ENCODE measurements at regions of chr11 and their contacts with region 1.

Region 1: GRCh38 chr11:82906244-82906654 is 4.7 kb downstream of the DDIAS start:
- DNase-seq: no peak
- H3K4me3 ChIP-seq: no peak overlapping the region
- H3K27ac ChIP-seq: no peak overlapping the region
- H3K4me1 ChIP-seq: peaks cover 0 to 5% (median 5%) of the 10 kb centered on the region in 4 donors
- H3K27me3 ChIP-seq: no peaks in the 10 kb centered on the region
- CTCF ChIP-seq: peak; percentile 21 to 58 (median 33)
- EP300 ChIP-seq: no peak
- POLR2A ChIP-seq: no peak

Region 2: GRCh38 chr11:83187465-83187864 is 281.2 kb after region 1 on chr11:
- intact Hi-C with region 1: no loop called
- DNase-seq: no peak
- H3K4me3 ChIP-seq: no peak overlapping the region
- H3K27ac ChIP-seq: no peak overlapping the region
- H3K4me1 ChIP-seq: peaks cover 0 to 7% (median 6%) of the 10 kb centered on the region in 4 donors
- H3K27me3 ChIP-seq: no peaks in the 10 kb centered on the region
- CTCF ChIP-seq: no peak
- EP300 ChIP-seq: no peak
- POLR2A ChIP-seq: no peak

Region 3: GRCh38 chr11:83249972-83250593 is 343.8 kb after region 1 on chr11:
- intact Hi-C with region 1: loop called (anchors 2 kb)
- DNase-seq: no peak
- H3K4me3 ChIP-seq: no peak overlapping the region
- H3K27ac ChIP-seq: no peak overlapping the region
- H3K4me1 ChIP-seq: no peaks in the 10 kb centered on the region
- H3K27me3 ChIP-seq: no peaks in the 10 kb centered on the region
- CTCF ChIP-seq: peak; percentile 16 to 67 (median 46)
- EP300 ChIP-seq: no peak
- POLR2A ChIP-seq: no peak

Region 4: DNA sequence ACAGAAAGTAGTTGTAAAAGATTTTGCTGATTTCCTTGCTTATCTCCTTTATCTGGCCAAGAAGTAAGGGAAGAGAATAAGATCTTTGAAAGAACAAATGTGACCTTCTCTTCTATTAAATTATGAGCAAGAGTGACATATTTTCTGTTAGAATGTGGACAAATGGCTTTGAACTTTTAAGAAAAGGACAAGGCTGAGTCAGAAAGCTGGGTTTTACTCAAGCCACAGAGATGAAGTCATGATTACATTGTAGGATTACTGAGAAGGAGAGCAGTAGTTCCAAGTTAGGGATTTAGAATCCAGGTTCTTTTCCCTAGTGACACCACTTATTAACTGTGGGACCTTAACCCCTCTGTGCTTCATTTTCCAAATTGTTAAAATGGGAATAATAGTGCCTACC is 366.4 kb after region 1 on chr11:
- intact Hi-C with region 1: no loop called
- DNase-seq: no peak
- H3K4me3 ChIP-seq: no peak overlapping the region
- H3K27ac ChIP-seq: no peak overlapping the region
- H3K4me1 ChIP-seq: no peaks in the 10 kb centered on the region
- H3K27me3 ChIP-seq: no peaks in the 10 kb centered on the region
- CTCF ChIP-seq: no peak
- EP300 ChIP-seq: no peak
- POLR2A ChIP-seq: no peak

Region 5: DNA sequence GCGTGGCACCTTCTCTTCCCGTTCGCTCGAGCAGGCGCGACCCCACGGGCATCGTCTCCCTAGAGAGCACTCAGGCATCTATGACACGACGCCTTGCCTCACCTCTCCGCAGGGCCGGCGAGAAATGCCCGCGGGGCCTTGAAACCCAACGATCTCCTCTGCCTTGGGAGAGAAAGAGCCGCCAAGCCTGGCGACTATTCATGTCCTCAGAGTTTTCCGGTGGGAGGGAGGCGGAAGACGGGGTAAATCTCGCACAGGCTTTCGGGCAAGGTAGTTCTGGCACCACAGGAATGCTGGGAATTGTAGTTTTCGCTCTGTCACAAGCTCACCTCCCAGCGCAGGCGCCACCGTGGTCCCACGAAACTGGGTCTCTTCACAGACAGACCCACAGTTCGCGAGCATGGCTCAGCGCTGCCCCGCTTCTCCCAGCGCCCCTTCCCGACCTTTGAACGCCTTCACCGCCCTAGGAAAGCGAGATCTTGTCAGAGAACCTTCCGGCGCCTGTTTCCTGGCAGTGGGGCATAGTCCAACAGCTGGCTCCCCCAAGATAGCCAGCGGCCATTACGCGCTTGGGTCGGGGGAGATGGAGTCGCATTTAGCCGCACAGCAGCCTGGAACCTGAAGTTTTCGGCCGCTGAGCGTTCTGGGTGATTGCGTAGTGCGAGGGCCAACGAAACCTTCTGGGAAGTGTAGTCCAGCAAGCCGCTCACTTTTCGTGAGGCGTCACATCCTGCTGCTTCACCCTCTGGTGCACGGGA is 379.7 kb after region 1 on chr11 and contains the start of gene CCDC90B:
- intact Hi-C with region 1: loop called (anchors 2 kb)
- DNase-seq: peak; percentile 98
- H3K4me3 ChIP-seq: peak within 1 kb of the TSS; percentile 57 to 80 (median 72)
- H3K27ac ChIP-seq: peak within 1 kb of the TSS; percentile 95 to 97 (median 96)
- H3K4me1 ChIP-seq: peaks cover 0 to 46% (median 40%) of the 10 kb centered on the region in 4 donors
- H3K27me3 ChIP-seq: no peaks in the 10 kb centered on the region
- CTCF ChIP-seq: no peak
- EP300 ChIP-seq: no peak
- POLR2A ChIP-seq: peak; percentile 67 to 73
- total RNA-seq, gene CCDC90B: 28.9 to 49.2 (median 42.6) TPM